Heart left ventricle (tissue), 16 donors: ENCODE measurements at regions of chr18 and their contacts with region 1.

Region 1: GRCh38 chr18:52766002-52766545 is 426.1 kb downstream of the DCC start:
- DNase-seq: peak in 1 of 5 donors; percentile 33
- ATAC-seq: no peak
- H3K4me3 ChIP-seq: no peak overlapping the region
- H3K27ac ChIP-seq: no peak overlapping the region
- H3K4me1 ChIP-seq: no peaks in the 10 kb centered on the region
- H3K27me3 ChIP-seq: no peaks in the 10 kb centered on the region
- CTCF ChIP-seq: no peak
- POLR2A ChIP-seq: no peak

Region 2: GRCh38 chr18:52723550-52723970 is 42.5 kb before region 1 on chr18:
- intact Hi-C with region 1: loop called in 1 of 10 experiments (anchors 10 kb)
- DNase-seq: no peak
- ATAC-seq: no peak
- H3K4me3 ChIP-seq: no peak overlapping the region
- H3K27ac ChIP-seq: no peak overlapping the region
- H3K4me1 ChIP-seq: no peaks in the 10 kb centered on the region
- H3K27me3 ChIP-seq: no peaks in the 10 kb centered on the region
- CTCF ChIP-seq: no peak
- POLR2A ChIP-seq: no peak

Region 3: GRCh38 chr18:52750995-52751394 is 15.1 kb before region 1 on chr18:
- intact Hi-C with region 1: no loop called
- DNase-seq: no peak
- ATAC-seq: no peak
- H3K4me3 ChIP-seq: no peak overlapping the region
- H3K27ac ChIP-seq: no peak overlapping the region
- H3K4me1 ChIP-seq: no peaks in the 10 kb centered on the region
- H3K27me3 ChIP-seq: no peaks in the 10 kb centered on the region
- CTCF ChIP-seq: no peak
- POLR2A ChIP-seq: no peak